ENCODE measurements at regions of chr19 and their contacts with region 1.

Region 1: DNA sequence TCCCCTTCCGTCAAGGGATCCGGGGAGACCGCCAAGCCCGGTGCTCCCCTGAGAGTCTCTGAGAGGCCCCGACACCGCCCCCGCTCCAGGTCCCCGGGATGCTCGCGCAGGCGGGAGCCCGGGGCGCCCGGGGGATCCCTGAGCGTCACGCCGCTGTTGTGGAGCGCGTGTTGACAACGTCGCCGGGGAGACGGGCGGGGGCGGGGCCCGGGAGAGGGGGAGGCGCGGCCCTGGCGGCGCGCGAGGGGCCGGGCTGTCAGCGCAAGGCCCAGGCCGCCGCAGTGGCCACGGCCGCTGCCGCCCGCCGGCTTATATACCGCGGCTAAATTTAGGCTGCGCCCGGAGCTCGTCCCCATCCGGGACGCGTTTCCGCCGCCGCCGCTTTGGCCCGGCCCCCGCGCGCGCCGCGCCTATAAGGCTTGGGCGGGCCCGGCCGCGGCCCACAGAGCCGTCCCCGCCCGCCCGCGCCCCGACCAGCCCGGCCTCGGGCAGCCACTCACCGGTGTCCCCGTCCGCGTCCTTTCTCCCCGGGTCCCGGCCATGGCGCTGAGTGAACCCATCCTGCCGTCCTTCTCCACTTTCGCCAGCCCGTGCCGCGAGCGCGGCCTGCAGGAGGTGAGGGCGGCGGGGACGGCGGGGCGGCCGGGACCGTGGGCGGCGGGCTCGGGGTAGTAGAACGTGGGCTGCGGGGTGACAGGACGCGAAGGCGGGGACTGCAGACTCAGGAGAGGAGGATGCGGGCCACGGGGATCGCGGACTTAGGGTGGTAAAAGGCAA is at the start of gene KLF2:
- DNase-seq: peak; percentile 73 to 97
- H3K4me3 ChIP-seq: peak within 1 kb of the TSS; percentile 97 to 99
- H3K27ac ChIP-seq: peak within 1 kb of the TSS; percentile 96 to 99
- H3K4me1 ChIP-seq: peaks cover 2 to 31% of the 10 kb centered on the region in 2 donors
- H3K27me3 ChIP-seq: no peaks in the 10 kb centered on the region
- CTCF ChIP-seq: peak in 1 of 3 experiments; percentile 20
- total RNA-seq, gene KLF2: 281 TPM

Region 2: DNA sequence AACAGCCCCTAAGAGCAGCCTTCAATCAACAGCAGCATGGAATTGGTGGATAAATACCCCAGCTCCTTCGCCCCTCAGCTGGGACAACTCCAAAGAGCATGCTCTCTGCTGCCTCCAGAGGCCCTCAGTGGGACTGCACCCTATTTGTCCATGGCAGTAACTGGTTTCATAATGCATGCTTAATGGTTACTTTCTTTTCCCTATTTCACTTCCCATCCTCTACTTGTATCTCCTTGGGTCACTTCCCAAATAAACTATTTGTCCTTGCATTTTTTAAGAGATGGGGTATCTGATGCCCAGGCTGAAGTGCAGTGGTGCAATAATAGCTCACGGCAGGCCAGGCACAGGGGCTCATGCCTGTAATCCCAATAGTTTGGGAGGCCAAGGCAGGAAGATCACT is 261.8 kb before region 1 on chr19:
- intact Hi-C with region 1: loop called (anchors 5 kb)
- DNase-seq: peak in 1 of 2 donors; percentile 65
- H3K4me3 ChIP-seq: no peak overlapping the region
- H3K27ac ChIP-seq: no peak overlapping the region
- H3K4me1 ChIP-seq: peaks cover 0 to 27% of the 10 kb centered on the region in 2 donors
- H3K27me3 ChIP-seq: no peaks in the 10 kb centered on the region
- CTCF ChIP-seq: peak; percentile 41 to 72 (median 67)

Region 3: GRCh38 chr19:16197622-16198369 is 126.8 kb before region 1 on chr19 and contains the start of gene AP1M1:
- intact Hi-C with region 1: loop called (anchors 1 kb)
- DNase-seq: peak; percentile 91 to 99
- H3K4me3 ChIP-seq: peak within 1 kb of the TSS; percentile 87 to 93
- H3K27ac ChIP-seq: peak within 1 kb of the TSS; percentile 84
- H3K4me1 ChIP-seq: peaks cover 3 to 25% of the 10 kb centered on the region in 2 donors
- H3K27me3 ChIP-seq: no peaks in the 10 kb centered on the region
- CTCF ChIP-seq: no peak
- total RNA-seq, gene AP1M1: 162 TPM

Region 4: DNA sequence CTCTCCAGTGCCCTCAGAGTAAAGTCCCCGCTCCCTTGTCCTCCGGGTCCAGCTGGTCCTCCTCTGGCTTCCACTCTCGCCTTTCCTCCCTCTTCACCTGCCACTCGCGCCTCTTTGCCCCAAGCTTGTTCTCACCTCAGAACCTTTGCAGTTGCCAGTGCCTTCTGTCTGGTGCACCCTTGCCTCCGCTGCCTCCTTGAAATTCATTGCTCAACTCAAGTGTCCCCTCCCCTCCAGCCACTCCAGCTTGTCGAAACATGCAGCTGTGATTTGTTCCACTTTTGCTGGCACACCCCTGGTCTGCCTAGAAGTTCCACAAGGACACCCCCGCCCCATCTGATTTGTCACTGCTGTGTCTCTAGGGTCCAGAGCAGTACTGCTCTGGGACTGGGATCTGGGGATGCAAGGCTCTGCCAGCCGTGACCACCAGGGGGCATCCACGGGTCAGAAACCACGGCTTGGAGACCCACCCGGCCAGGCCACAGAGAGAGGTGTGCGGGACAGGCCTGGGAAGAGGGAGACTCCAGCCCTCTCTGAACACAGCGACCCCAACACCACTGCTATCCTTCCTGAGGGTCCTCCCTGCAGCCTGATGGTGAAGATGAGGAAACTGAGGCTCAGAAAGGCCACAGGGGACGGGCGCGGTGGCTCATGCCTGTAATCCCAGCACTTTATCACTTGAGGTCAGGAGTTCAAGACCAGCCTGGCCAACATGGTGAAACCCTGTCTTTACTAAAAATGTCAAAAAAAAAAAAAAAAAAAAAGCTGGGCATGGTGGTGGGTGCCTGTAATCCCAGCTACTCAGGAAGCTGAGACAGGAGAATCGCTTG is 77.0 kb before region 1 on chr19:
- intact Hi-C with region 1: loop called (anchors 5 kb)
- DNase-seq: peak; percentile 43 to 93
- H3K4me3 ChIP-seq: no peak overlapping the region
- H3K27ac ChIP-seq: no peak overlapping the region
- H3K4me1 ChIP-seq: peaks cover 0 to 5% of the 10 kb centered on the region in 2 donors
- H3K27me3 ChIP-seq: no peaks in the 10 kb centered on the region
- CTCF ChIP-seq: peak; percentile 92 to 99 (median 95)

Region 5: GRCh38 chr19:16283210-16284061 is 41.1 kb before region 1 on chr19:
- intact Hi-C with region 1: loop called (anchors 2 kb)
- DNase-seq: peak; percentile 80 to 93
- H3K4me3 ChIP-seq: peak overlapping the region; percentile 29 to 57
- H3K27ac ChIP-seq: peak overlapping the region; percentile 95
- H3K4me1 ChIP-seq: peaks cover 23 to 63% of the 10 kb centered on the region in 2 donors
- H3K27me3 ChIP-seq: no peaks in the 10 kb centered on the region
- CTCF ChIP-seq: no peak

Region 6: GRCh38 chr19:16293118-16294091 is 31.2 kb before region 1 on chr19:
- intact Hi-C with region 1: loop called (anchors 1 kb)
- DNase-seq: peak; percentile 39 to 93
- H3K4me3 ChIP-seq: peak overlapping the region; percentile 24 to 45
- H3K27ac ChIP-seq: peak overlapping the region; percentile 92 to 97
- H3K4me1 ChIP-seq: peaks cover 8 to 15% of the 10 kb centered on the region in 2 donors
- H3K27me3 ChIP-seq: no peaks in the 10 kb centered on the region
- CTCF ChIP-seq: no peak

Region 7: GRCh38 chr19:16338470-16339360 is 14.1 kb after region 1 on chr19:
- intact Hi-C with region 1: no loop called
- DNase-seq: peak; percentile 46 to 89
- H3K4me3 ChIP-seq: peak overlapping the region in 1 of 2 donors; percentile 15
- H3K27ac ChIP-seq: peak overlapping the region; percentile 69 to 83
- H3K4me1 ChIP-seq: peaks cover 14 to 25% of the 10 kb centered on the region in 2 donors
- H3K27me3 ChIP-seq: no peaks in the 10 kb centered on the region
- CTCF ChIP-seq: peak; percentile 17 to 54 (median 20)

Region 8: GRCh38 chr19:18281082-18282020 is 1956.8 kb after region 1 on chr19 and contains the start of gene JUND:
- intact Hi-C with region 1: loop called (anchors 10 kb)
- DNase-seq: peak; percentile 96 to 99
- H3K4me3 ChIP-seq: peak within 1 kb of the TSS; percentile 92 to 100
- H3K27ac ChIP-seq: peak within 1 kb of the TSS; percentile 99 to 100
- H3K4me1 ChIP-seq: peaks cover 15 to 36% of the 10 kb centered on the region in 2 donors
- H3K27me3 ChIP-seq: no peaks in the 10 kb centered on the region
- CTCF ChIP-seq: peak in 1 of 3 experiments; percentile 27
- total RNA-seq, gene JUND: 3,570 TPM

Measured in ascending aorta (tissue), 2 donors.